Caco-2 (cell line): ENCODE measurements at regions of chr11 and their contacts with region 1.

Region 1: DNA sequence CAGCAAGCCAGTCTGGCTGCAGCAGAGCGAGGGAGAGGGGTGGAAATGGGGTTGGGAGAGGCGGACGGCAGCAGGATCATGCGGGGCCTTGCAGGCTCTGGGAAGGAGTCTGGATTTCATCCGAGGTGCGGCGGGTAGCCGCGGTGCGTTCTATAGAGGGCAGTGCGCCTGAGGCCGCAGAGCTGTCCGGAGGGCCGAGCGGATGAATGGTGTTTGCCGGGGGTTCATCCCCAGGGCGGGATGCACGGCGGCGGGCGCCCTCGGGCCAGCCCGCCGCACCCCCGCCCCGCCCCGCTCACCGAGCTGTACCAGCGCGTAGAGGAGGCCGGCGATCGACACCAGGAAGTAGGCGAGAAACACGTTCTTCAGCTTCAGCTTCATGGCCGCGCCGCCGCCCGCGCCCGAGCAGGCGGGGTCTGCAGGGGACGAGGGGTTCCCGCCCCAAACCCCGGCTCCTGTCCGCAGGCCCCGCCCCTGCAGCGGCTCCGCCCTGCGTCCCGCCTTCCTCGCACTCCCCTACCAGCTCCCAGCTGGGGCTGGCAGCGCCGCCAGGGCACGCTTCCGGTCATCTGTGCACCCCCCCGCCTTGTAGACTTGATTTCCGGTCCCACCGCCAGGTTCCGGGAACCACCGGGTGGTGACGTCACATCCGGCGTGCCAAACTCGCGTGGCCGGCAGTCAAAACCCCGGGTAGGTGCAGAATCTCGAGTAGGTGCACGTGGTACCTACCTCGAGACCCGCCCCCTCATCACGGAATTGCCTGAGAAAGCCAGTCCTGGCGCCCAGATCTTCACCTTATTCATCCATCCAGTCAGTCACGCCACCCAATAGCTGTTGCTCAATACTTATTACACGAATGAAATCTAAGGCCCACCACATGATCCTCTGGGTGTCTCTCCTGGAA is at the start of gene B3GAT3:
- DNase-seq: peak; percentile 100
- H3K4me3 ChIP-seq: peak within 1 kb of the TSS; percentile 81
- H3K4me3 Mint-ChIP-seq: peak within 1 kb of the TSS; percentile 91
- H3K27ac Mint-ChIP-seq: peak within 1 kb of the TSS; percentile 81
- H3K4me1 ChIP-seq: peaks cover 13% of the 10 kb centered on the region
- H3K4me1 Mint-ChIP-seq: peaks cover 7% of the 10 kb centered on the region
- H3K27me3 ChIP-seq: no peaks in the 10 kb centered on the region
- H3K27me3 Mint-ChIP-seq: no peaks in the 10 kb centered on the region
- CTCF ChIP-seq: no peak
- total RNA-seq, gene B3GAT3: 37.2 and 37.6 TPM in 2 replicates

Region 2: GRCh38 chr11:62370743-62371440 is 250.9 kb before region 1 on chr11:
- CTCF ChIA-PET with region 1: no interaction called
- POLR2A ChIA-PET with region 1: no interaction called
- intact Hi-C with region 1: no loop called
- DNase-seq: no peak
- H3K4me3 ChIP-seq: no peak overlapping the region
- H3K4me3 Mint-ChIP-seq: peak overlapping the region; percentile 50
- H3K27ac Mint-ChIP-seq: no peak overlapping the region
- H3K4me1 ChIP-seq: peaks cover 36% of the 10 kb centered on the region
- H3K4me1 Mint-ChIP-seq: peaks cover 37% of the 10 kb centered on the region
- H3K27me3 ChIP-seq: no peaks in the 10 kb centered on the region
- H3K27me3 Mint-ChIP-seq: no peaks in the 10 kb centered on the region
- CTCF ChIP-seq: no peak

Region 3: DNA sequence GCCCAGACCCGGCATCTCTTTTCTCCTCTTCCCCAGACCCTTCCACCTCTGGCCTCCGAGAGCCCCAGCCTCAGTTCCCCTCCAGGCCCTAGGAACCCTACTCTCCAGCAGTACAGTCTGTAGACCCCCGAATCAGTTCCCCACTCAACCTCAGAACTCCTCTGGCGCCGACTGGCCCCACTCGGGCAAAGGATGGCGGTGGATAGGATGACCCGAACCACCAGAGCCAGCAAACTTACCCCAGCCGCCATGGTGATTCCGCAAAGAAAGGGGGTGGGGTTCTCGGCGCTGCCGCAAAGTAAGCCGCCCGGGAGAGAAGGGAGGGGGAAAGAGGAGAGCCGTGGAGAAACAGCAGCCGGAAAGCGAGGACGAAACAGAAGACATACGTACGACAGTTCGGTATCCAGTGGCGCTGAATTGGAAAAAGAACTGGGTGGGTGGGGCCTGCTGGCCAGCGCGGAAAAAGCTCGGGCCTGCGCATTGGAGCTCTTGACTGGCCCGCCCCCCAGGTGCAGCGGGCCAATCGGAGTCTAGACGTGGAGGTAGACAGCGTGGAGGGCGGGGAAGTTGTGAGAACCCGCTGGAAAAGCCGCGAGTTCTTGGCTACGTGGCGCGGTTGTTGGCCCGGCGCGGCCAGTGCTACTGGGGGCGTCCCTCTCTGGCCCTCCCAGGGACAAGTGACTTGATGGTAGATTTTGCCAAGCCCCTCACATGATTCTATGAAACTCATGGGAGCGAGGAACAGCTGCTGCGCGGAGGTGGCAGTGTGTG is 48.0 kb before region 1 on chr11 and contains the start of gene EEF1G:
- CTCF ChIA-PET with region 1: interaction called, 5 read pairs
- POLR2A ChIA-PET with region 1: interaction called, 23 read pairs
- intact Hi-C with region 1: no loop called
- DNase-seq: peak; percentile 100
- H3K4me3 ChIP-seq: peak within 1 kb of the TSS; percentile 62
- H3K4me3 Mint-ChIP-seq: peak within 1 kb of the TSS; percentile 97
- H3K27ac Mint-ChIP-seq: peak within 1 kb of the TSS; percentile 100
- H3K4me1 ChIP-seq: peaks cover 25% of the 10 kb centered on the region
- H3K4me1 Mint-ChIP-seq: peaks cover 56% of the 10 kb centered on the region
- H3K27me3 ChIP-seq: no peaks in the 10 kb centered on the region
- H3K27me3 Mint-ChIP-seq: no peaks in the 10 kb centered on the region
- CTCF ChIP-seq: no peak
- total RNA-seq, gene EEF1G: 2,004 and 2,035 TPM in 2 replicates

Region 4: DNA sequence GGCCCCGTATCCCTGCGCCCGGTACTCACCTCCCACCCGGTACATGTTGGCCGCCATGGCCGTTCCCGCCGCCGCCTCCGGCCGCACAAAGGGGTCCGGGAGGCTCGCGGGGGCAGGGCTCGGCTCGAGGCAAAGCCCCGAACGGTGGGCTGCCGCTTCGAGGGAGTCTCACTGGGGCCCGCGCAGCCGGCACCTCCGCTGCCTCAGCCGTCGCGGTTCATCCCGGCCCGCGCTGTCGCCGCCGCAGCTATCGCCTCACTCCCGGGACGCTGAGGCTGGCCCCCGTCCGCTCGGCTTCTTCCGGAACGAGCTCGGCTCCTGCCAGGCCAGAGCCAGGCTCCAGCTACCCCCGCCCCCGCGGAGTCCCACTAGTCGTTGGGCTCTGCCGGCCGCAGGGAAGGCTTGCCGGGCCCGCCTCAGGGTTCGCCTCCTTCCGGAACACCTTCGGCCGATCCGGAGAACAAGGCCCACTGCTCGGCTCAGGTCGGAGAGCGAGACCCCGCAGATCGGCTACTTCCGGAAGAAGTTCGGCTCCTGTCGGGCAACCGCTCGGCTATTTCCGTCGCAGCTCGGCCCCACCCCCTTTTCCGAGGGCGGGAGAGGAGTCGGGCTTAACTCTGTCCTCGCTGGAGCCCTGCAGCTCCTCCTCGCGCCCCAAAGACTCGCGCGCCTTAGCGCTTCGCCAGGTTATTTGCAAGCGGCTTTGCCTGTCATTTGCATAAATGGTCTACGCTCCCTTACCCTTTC is 20.3 kb before region 1 on chr11 and contains the start of gene MTA2:
- CTCF ChIA-PET with region 1: no interaction called
- POLR2A ChIA-PET with region 1: interaction called, 42 read pairs
- intact Hi-C with region 1: no loop called
- DNase-seq: peak; percentile 99 to 100
- H3K4me3 ChIP-seq: peak within 1 kb of the TSS; percentile 97
- H3K4me3 Mint-ChIP-seq: peak within 1 kb of the TSS; percentile 88
- H3K27ac Mint-ChIP-seq: peak within 1 kb of the TSS; percentile 89
- H3K4me1 ChIP-seq: peaks cover 35% of the 10 kb centered on the region
- H3K4me1 Mint-ChIP-seq: peaks cover 36% of the 10 kb centered on the region
- H3K27me3 ChIP-seq: no peaks in the 10 kb centered on the region
- H3K27me3 Mint-ChIP-seq: no peaks in the 10 kb centered on the region
- CTCF ChIP-seq: no peak
- total RNA-seq, gene MTA2: 134 and 135 TPM in 2 replicates

Region 5: DNA sequence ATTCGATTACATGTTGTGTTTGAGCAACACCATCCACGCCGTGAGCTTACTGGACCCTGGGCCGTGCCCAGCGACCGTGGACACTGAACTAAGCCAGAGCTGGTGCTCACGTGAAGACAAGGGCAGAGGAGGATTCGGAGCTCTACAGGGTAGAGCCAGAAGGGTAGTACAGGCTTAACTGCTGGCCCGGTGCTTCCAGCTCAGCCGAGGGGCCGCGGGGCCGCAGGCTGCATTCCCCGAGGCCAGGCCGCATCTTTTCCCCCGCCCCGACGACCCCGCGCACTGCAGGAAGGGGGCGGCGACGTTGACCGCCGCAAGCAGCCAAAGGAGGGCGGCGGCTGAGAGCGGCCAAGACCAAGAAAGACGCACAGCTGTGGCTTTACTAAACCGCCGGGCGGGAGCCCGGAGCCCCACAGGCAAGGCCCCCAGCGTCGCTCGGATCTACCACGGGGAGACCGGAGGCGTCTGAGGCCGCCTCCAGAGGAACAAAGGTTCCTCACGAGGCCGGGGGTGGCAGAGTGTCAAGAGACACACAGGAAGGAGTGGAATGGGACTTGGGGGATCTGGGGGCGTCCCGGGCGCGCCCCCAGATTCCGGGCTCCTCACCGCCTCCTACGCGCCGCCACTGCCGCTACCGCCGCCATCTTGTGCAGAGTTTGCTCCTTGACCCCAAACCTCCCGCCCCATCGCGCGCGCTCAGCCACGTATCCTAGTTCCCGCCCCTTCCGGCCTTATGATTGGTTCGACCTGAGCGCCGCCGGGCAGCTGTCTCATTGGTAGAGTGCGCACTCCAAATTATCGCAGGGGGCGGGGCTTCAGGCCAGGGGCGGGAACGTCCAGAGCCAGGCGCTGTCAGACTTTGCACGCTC is 24.4 kb after region 1 on chr11 and contains the start of gene GANAB:
- CTCF ChIA-PET with region 1: no interaction called
- POLR2A ChIA-PET with region 1: interaction called, 10 read pairs
- intact Hi-C with region 1: loop called (anchors 1 kb)
- DNase-seq: peak; percentile 99
- H3K4me3 ChIP-seq: peak within 1 kb of the TSS; percentile 66
- H3K4me3 Mint-ChIP-seq: peak within 1 kb of the TSS; percentile 91
- H3K27ac Mint-ChIP-seq: peak within 1 kb of the TSS; percentile 91
- H3K4me1 ChIP-seq: peaks cover 17% of the 10 kb centered on the region
- H3K4me1 Mint-ChIP-seq: no peaks in the 10 kb centered on the region
- H3K27me3 ChIP-seq: no peaks in the 10 kb centered on the region
- H3K27me3 Mint-ChIP-seq: no peaks in the 10 kb centered on the region
- CTCF ChIP-seq: no peak
- total RNA-seq, gene GANAB: 414 and 442 TPM in 2 replicates

Region 6: GRCh38 chr11:62652161-62653006 is 30.6 kb after region 1 on chr11:
- CTCF ChIA-PET with region 1: interaction called, 4 read pairs
- POLR2A ChIA-PET with region 1: interaction called, 17 read pairs
- intact Hi-C with region 1: no loop called
- DNase-seq: no peak
- H3K4me3 ChIP-seq: peak overlapping the region; percentile 80
- H3K4me3 Mint-ChIP-seq: peak overlapping the region; percentile 75
- H3K27ac Mint-ChIP-seq: peak overlapping the region; percentile 95
- H3K4me1 ChIP-seq: peaks cover 10% of the 10 kb centered on the region; the same call in 1 of the 2 replicates
- H3K4me1 Mint-ChIP-seq: peaks cover 7% of the 10 kb centered on the region
- H3K27me3 ChIP-seq: no peaks in the 10 kb centered on the region
- H3K27me3 Mint-ChIP-seq: no peaks in the 10 kb centered on the region
- CTCF ChIP-seq: no peak